G401 (cell line): ENCODE measurements at regions of chr19 and their contacts with region 1.

Region 1: DNA sequence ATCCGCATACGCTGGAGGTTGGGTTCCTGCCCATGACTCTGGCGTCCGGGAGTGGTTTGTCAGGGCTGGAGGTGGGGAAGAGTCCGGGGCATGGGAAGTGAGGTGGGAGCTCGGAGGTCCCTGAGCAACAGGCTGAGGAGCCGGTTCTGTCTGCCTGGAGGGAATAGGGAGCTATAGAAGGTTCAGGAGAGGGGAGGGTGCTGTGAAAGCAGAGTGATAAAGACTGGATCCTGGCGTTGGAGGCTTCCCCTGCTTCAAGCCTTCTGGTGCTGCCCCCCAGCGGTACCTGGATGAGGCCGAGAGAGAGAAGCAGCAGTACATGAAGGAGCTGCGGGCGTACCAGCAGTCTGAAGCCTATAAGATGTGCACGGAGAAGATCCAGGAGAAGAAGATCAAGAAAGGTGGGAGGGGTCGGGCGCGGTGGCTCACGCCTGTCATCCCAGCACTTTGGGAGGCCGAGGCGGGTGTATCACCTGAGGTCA is 2.6 kb downstream of the HMG20B start:
- DNase-seq: peak; percentile 57

Region 2: DNA sequence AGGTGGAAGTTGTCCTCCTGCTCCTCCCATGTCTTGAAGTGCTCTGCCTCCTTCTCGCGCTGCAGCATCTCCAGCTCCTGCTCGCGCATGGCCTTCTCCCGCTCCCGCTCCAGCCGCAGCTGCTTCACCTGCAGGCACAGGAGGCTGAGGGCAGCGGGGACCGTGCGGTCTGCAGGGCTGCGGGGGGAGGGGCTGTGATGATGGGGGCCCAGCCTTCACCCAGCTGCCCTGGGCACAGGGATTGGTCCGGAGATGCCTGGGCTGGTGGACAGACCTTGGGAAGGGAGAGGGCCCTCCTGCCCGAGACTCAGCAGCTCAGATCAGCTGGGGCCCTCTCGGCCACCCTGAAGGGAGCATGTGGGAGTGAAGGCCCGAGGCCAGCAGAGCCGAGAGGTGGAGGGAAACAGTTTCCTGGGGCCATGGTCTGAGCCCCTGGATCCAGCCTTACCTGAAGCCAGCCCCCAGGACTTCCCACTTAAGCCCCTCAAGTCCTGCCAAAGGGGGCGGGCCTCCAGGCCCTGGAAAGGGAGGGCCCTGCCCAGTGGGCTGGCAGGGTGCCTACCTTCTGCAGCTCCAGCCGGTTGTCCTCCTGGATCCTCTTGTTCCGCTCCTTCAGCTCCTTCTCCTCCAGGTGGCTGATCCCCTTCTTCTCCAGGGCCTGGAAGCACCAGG is 45.0 kb after region 1 on chr19:
- in situ Hi-C with region 1: loop called (anchors 5 kb)
- DNase-seq: no peak